Activated naive CD4-positive, alpha-beta T cell treated with anti-CD3 and anti-CD28 coated beads, Interleukin-2, amount 10 ng/mL, durations not matched to agents 7 days and 5 days (primary cell): ENCODE measurements at regions of chrX and their contacts with region 1.

Region 1: GRCh38 chrX:40539214-40540142 is 41.3 kb upstream of the ATP6AP2 start:
- DNase-seq: peak; percentile 83
- H3K4me3 Mint-ChIP-seq: no peak overlapping the region
- H3K27ac Mint-ChIP-seq: no peak overlapping the region
- H3K4me1 Mint-ChIP-seq: peaks cover 26% of the 10 kb centered on the region
- H3K27me3 Mint-ChIP-seq: peaks cover 20% of the 10 kb centered on the region

Region 2: GRCh38 chrX:40647307-40648197 is 108.1 kb after region 1 on chrX and contains the start of gene CXorf38:
- CTCF ChIA-PET with region 1: interaction called, 11 read pairs
- DNase-seq: peak; percentile 94
- H3K4me3 Mint-ChIP-seq: peak within 1 kb of the TSS; percentile 98
- H3K27ac Mint-ChIP-seq: peak within 1 kb of the TSS; percentile 94
- H3K4me1 Mint-ChIP-seq: peaks cover 25% of the 10 kb centered on the region
- H3K27me3 Mint-ChIP-seq: no peaks in the 10 kb centered on the region